ENCODE measurements at regions of chr6 and their contacts with region 1.

Region 1: DNA sequence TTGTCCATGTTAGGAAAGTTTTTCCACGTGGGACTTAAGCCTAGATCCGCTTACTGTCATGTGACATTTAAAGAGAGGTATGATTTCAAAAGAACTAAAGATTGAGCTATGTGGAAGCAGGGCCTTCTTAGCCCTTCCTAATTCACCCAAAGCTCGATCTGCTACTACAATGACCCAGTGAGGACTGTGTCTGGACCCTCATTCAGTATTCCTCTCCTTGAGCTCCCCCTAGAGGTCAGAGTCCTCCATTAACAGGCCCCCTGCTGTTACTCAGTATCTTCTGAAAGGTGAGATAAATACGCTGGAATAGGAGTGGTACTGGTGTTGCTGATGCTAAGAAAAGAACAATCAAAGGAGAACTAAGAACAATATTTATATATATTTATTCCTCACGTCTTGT is 414.0 kb downstream of the GJA1 start:
- DNase-seq: peak; percentile 73
- ATAC-seq: peak; percentile 95
- H3K4me3 ChIP-seq: no peak overlapping the region
- H3K27ac ChIP-seq: no peak overlapping the region
- H3K4me1 ChIP-seq: peaks cover 6% of the 10 kb centered on the region
- H3K27me3 ChIP-seq: no peaks in the 10 kb centered on the region
- CTCF ChIP-seq: peak; percentile 91
- POLR2A ChIP-seq: no peak
- RAD21 ChIP-seq: peak; percentile 96

Region 2: DNA sequence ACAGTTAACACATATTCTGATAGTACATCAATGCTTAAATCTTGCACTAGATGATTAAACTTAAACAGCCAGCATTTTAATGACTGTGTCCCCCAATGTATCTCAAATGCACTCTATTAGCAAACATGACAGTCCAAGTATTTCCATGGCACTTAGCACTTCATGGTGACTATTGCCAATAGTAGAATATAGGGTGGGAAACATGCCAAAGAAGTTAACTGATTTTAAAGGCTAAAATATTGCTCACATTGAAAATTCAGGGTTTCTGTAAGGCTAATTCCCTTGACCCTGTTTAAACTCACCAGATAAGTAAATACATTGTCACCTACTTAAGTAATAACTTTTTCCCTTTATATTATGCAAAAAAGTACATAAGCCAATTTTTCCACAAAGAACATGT is 782.1 kb before region 1 on chr6:
- CTCF ChIA-PET with region 1: no interaction called
- POLR2A ChIA-PET with region 1: no interaction called
- dilution Hi-C with region 1: no loop called
- in situ Hi-C with region 1: no loop called
- intact Hi-C with region 1: loop called (anchors 10 kb)
- DNase-seq: no peak
- ATAC-seq: no peak
- H3K4me3 ChIP-seq: no peak overlapping the region
- H3K27ac ChIP-seq: no peak overlapping the region
- H3K4me1 ChIP-seq: no peaks in the 10 kb centered on the region
- H3K27me3 ChIP-seq: no peaks in the 10 kb centered on the region
- CTCF ChIP-seq: no peak
- POLR2A ChIP-seq: no peak
- RAD21 ChIP-seq: no peak

Region 3: DNA sequence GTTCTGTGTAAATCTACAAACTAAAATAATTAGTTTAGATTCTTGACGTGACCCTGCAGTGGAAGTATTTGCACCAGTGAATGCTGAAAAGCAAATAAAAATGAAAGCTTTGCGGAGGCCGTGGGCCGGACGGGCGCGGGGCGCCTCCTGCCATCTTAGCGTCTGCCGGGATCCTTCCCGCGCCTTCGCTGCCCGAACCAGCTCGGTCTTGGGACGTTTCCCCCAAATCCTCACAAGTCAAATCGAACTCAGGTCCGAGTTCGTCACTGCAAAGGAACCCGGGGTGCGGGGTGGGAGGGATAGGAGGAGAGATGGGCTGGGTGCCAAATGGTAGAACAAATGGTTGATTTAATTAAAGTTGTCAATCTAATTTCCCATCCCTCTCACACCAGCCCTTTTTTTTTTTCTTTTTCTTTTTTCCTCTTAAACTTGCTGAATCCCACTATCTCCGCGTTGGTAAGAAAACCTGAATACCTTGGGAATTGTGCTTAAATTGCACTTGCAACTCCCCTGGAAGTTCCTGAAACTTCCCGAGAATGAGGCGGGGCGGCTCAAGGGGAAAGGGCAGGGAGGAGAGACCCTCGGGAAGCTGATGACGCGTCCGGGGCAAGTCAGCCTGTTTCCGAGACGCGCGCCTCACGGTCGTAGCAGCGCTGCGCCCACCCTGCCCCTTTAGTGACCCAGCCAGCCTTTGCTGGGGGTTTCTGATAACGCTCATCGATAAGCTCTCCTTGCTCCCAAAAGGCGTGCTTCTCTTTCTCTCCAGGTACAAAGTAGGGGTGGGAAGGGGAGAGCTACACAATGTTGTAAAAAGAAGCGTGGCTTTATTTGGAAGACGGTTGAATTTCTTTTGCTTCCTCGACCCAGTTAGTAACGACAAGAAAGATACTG is 412.3 kb before region 1 on chr6:
- CTCF ChIA-PET with region 1: interaction called, 12 read pairs
- POLR2A ChIA-PET with region 1: interaction called, 3 read pairs
- dilution Hi-C with region 1: no loop called
- in situ Hi-C with region 1: loop called (anchors 5 kb)
- intact Hi-C with region 1: loop called (anchors 1 kb)
- DNase-seq: peak; percentile 40
- ATAC-seq: peak; percentile 31
- H3K4me3 ChIP-seq: peak overlapping the region; percentile 89
- H3K27ac ChIP-seq: peak overlapping the region; percentile 96
- H3K4me1 ChIP-seq: peaks cover 10% of the 10 kb centered on the region
- H3K27me3 ChIP-seq: no peaks in the 10 kb centered on the region
- CTCF ChIP-seq: no peak
- POLR2A ChIP-seq: no peak
- RAD21 ChIP-seq: no peak; the same call in 1 of the 2 replicates

Region 4: DNA sequence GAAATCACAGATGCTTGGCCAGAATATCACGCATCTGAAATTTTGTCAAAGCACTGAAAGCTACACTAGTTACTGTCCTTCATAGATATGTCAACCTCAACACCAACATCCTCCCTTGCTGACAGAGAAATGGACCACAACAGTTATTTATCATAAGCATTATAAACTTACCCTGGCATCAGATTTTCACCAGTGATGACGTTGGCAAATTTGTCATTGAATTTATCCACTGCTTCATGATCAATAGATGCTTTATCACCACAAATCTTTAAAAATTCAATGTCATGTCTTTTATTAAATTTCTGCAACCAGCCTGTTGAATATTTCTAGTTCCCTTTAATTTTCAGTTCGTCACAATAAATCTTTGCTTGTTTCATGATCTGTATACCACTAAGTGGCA is 208.3 kb before region 1 on chr6:
- CTCF ChIA-PET with region 1: no interaction called
- POLR2A ChIA-PET with region 1: no interaction called
- dilution Hi-C with region 1: no loop called
- in situ Hi-C with region 1: no loop called
- intact Hi-C with region 1: loop called (anchors 1 kb)
- DNase-seq: no peak
- ATAC-seq: no peak
- H3K4me3 ChIP-seq: no peak overlapping the region
- H3K27ac ChIP-seq: no peak overlapping the region
- H3K4me1 ChIP-seq: peaks cover 2% of the 10 kb centered on the region; the same call in 1 of the 2 replicates
- H3K27me3 ChIP-seq: no peaks in the 10 kb centered on the region
- CTCF ChIP-seq: no peak
- POLR2A ChIP-seq: no peak
- RAD21 ChIP-seq: no peak

Region 5: DNA sequence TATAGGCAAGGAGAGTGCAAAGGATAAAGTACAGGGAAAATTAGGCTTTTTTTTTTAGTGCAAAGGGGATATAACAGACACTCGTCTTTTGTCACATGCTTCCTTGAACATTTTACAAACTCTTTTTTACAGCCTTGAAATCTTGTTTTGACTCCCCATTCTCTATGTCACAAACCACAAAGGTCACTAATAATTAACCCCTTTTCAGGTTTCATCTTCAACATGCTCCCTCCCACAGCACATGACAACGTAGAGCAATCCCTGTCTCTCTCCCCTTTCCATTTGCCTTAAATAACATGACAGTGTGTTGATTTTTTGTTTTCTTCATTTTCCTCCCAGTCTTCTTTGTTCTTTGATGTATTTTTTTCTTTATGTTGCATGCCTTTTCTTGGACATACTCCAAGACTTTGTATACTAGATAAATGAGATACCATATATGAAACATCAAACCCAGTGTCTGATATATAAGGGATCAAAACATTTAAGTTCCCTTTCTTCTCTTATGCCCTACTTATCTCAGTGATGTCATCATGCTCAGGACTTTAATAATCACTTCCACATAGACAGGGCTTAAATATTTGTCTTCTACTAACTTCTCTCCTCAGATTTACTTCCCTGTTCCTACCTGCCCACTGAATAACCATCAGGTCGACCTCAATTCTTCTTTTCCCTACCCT is 171.2 kb after region 1 on chr6:
- CTCF ChIA-PET with region 1: no interaction called
- POLR2A ChIA-PET with region 1: no interaction called
- dilution Hi-C with region 1: no loop called
- in situ Hi-C with region 1: loop called (anchors 10 kb)
- intact Hi-C with region 1: no loop called
- DNase-seq: no peak
- ATAC-seq: no peak
- H3K4me3 ChIP-seq: no peak overlapping the region
- H3K27ac ChIP-seq: no peak overlapping the region
- H3K4me1 ChIP-seq: no peaks in the 10 kb centered on the region
- H3K27me3 ChIP-seq: no peaks in the 10 kb centered on the region
- CTCF ChIP-seq: no peak
- POLR2A ChIP-seq: no peak
- RAD21 ChIP-seq: no peak

Region 6: GRCh38 chr6:122184401-122184827 is 334.9 kb after region 1 on chr6:
- CTCF ChIA-PET with region 1: interaction called, 7 read pairs
- POLR2A ChIA-PET with region 1: no interaction called
- dilution Hi-C with region 1: no loop called
- in situ Hi-C with region 1: loop called (anchors 10 kb)
- intact Hi-C with region 1: loop called (anchors 2 kb)
- DNase-seq: peak; percentile 47
- ATAC-seq: peak; percentile 84
- H3K4me3 ChIP-seq: peak overlapping the region; percentile 3; the same call in 1 of the 2 replicates
- H3K27ac ChIP-seq: no peak overlapping the region
- H3K4me1 ChIP-seq: no peaks in the 10 kb centered on the region
- H3K27me3 ChIP-seq: no peaks in the 10 kb centered on the region
- CTCF ChIP-seq: peak; percentile 64
- POLR2A ChIP-seq: no peak
- RAD21 ChIP-seq: peak; percentile 79

Region 7: GRCh38 chr6:122798099-122798641 is 948.7 kb after region 1 on chr6:
- CTCF ChIA-PET with region 1: no interaction called
- POLR2A ChIA-PET with region 1: no interaction called
- dilution Hi-C with region 1: no loop called
- in situ Hi-C with region 1: no loop called
- intact Hi-C with region 1: no loop called
- DNase-seq: peak; percentile 84
- ATAC-seq: peak; percentile 67
- H3K4me3 ChIP-seq: no peak overlapping the region
- H3K27ac ChIP-seq: peak overlapping the region; percentile 6; the same call in 1 of the 2 replicates
- H3K4me1 ChIP-seq: peaks cover 25% of the 10 kb centered on the region
- H3K27me3 ChIP-seq: no peaks in the 10 kb centered on the region
- CTCF ChIP-seq: no peak
- POLR2A ChIP-seq: no peak
- RAD21 ChIP-seq: no peak

Measured in IMR-90 (cell line).